Psoas muscle (tissue), 8 donors: ENCODE measurements at regions of chr10 and their contacts with region 1.

Region 1: DNA sequence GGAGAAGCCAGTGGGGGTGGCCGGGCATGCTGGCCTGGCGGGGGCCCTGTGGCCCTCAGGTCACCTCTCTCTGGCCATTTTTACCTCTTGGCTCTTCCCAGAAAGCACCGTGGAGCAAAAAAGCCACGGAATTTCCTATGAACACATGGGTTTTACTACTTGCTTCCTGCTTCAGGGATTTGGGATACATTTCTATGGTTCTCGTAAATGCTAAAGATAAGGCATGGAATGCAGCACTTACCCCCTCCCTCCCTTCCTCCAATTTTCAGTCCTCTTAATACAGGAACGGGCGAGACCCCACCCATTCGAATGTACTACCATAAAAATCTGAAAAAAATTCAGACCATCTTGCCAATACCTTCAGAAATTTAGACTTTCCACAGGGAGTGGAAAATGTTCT is 279.7 kb downstream of the ARHGAP12 start:
- DNase-seq: no peak
- ATAC-seq: no peak
- H3K4me3 ChIP-seq: no peak overlapping the region
- H3K27ac ChIP-seq: peak overlapping the region; percentile 71
- H3K4me1 ChIP-seq: no peaks in the 10 kb centered on the region
- H3K27me3 ChIP-seq: no peaks in the 10 kb centered on the region
- CTCF ChIP-seq: no peak

Region 2: DNA sequence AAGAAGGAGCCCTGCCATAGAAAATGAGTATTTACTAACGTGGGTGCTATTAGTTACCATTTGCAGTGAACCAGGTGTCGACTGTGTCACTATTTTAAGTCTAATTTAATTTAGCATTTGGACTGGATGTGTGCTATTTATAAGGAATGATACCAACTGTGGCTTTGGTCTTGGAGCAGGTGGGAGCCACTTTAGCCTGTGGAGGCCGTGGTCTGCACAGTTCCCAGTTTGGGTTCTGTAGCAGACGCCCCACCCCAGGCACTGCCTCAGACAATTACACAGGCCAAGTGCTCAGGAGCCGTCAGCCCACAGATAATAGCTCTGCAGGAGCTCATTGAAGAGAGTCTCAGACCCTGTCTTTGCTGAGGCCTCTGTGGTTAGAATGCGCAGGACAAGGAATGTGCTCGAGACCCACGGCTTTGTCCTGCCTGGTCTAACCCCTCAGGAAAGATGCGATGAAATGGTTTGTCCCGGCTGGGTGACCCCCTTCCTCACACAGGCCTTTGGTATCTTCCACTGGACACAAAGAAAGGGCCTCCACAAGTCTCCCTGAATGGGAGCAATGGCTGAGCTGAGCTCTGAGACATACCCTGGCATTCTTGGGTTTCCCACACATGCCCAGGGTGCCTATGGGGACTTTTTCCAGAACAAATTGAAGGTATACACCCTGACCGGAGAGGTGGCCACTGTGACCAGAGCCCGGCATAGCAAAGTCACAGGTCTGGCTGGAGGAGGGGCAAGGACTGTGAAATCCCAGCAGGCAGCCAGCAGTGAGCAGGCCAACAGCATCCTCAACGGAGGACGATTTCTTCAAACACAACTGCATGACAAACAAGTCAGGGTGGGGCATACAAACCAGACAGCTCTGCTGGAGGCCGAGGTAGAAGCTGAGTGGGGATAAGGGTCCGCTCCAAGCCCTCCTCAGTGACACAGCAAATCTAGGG is 28.5 kb after region 1 on chr10:
- intact Hi-C with region 1: loop called in 1 of 2 experiments (anchors 1 kb)
- DNase-seq: no peak
- ATAC-seq: peak; percentile 64 to 79 (median 72)
- H3K4me3 ChIP-seq: peak overlapping the region; percentile 16
- H3K27ac ChIP-seq: peak overlapping the region; percentile 62
- H3K4me1 ChIP-seq: peaks cover 19% of the 10 kb centered on the region
- H3K27me3 ChIP-seq: no peaks in the 10 kb centered on the region
- CTCF ChIP-seq: no peak

Region 3: DNA sequence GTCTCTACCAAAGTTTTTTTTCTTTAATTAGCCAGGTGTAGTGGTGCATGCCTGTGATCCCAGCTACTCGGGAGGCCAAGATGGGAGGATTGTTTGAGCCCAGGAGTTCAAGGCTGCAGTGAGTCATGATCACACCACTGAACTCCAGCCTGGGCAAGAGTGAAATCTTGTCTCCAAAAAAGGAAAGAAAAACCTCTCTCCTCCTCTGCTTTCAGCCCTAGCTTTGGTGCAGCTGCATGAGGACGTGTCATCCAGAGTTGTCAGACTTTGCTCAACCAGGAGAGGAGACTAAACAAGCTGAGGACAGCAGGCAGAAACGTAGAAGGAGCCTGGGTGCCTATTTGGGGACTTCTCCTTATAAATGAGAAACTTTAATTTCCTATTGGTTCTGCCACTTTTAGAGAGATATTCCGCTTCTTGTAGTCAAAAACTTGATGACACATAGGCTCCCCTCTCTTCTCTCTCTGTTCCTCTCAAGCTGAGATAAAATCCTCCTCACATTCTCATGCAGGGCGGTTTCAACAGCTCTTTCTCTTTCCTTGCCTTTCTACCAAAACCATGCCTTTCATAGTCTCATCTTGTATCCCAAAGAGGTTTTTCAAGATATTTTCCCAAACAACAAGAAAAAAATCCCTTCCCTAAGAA is 74.3 kb after region 1 on chr10:
- intact Hi-C with region 1: no loop called
- DNase-seq: no peak
- ATAC-seq: no peak
- H3K4me3 ChIP-seq: no peak overlapping the region
- H3K27ac ChIP-seq: no peak overlapping the region
- H3K4me1 ChIP-seq: no peaks in the 10 kb centered on the region
- H3K27me3 ChIP-seq: no peaks in the 10 kb centered on the region
- CTCF ChIP-seq: no peak

Region 4: GRCh38 chr10:32253300-32253699 is 604.3 kb after region 1 on chr10:
- intact Hi-C with region 1: no loop called
- DNase-seq: no peak
- ATAC-seq: no peak
- H3K4me3 ChIP-seq: no peak overlapping the region
- H3K27ac ChIP-seq: no peak overlapping the region
- H3K4me1 ChIP-seq: no peaks in the 10 kb centered on the region
- H3K27me3 ChIP-seq: no peaks in the 10 kb centered on the region
- CTCF ChIP-seq: no peak